H1 (cell line): ENCODE measurements at regions of chr7 and their contacts with region 1.

Region 1: DNA sequence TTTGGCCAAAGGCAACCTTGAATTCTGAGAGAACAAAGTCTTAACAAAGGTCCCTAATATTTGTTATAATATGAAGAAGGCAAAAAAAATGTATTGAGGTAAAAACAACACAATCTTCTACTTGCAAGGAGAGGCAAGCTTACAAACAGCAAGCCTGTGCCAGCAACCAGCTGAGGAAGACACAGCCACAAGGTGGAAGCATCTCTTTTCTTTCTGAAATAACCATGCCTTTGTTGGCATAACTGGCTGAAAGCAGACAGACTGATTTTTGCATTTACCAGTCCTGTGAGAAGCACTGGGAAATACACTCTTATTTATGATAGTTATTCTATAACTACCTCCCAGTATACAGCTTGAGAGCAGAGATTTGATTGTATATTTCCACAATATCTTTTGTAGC is 292.0 kb downstream of the PHTF2 start:
- DNase-seq: no peak
- H3K4me3 ChIP-seq: no peak overlapping the region
- H3K27ac ChIP-seq: no peak overlapping the region
- H3K4me1 ChIP-seq: no peaks in the 10 kb centered on the region
- H3K27me3 ChIP-seq: no peaks in the 10 kb centered on the region
- CTCF ChIP-seq: peak in 1 of 3 experiments; percentile 39; a peak in 2 of 4 replicates
- EP300 ChIP-seq: no peak
- POLR2A ChIP-seq: no peak
- RAD21 ChIP-seq: peak; percentile 47 to 58

Region 2: DNA sequence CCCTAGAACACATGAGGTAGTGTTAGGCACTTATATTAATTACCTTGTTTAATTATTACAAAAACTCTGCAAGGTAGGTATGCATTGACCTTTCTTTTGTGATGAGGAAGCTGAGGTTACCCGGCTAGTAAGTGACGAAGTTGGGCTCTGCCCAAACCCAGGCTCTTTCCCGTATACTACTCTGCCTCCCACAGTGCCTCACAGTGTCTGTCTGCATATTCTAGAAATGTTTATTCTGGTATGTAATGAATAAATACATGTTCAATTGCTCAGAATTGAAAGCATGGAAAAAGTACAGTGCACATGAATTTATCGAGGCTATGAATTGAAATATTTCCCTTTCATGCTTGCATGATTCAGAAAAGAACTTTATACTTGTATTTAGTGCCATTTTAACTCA is 12.9 kb after region 1 on chr7:
- CTCF ChIA-PET with region 1: interaction called, 10 read pairs
- POLR2A ChIA-PET with region 1: interaction called, 4 read pairs
- DNase-seq: no peak
- H3K4me3 ChIP-seq: no peak overlapping the region
- H3K27ac ChIP-seq: no peak overlapping the region
- H3K4me1 ChIP-seq: no peaks in the 10 kb centered on the region
- H3K27me3 ChIP-seq: no peaks in the 10 kb centered on the region
- CTCF ChIP-seq: no peak
- EP300 ChIP-seq: no peak
- POLR2A ChIP-seq: no peak
- RAD21 ChIP-seq: no peak

Region 3: GRCh38 chr7:78151229-78151628 is 60.6 kb after region 1 on chr7:
- CTCF ChIA-PET with region 1: no interaction called
- POLR2A ChIA-PET with region 1: no interaction called
- DNase-seq: no peak
- H3K4me3 ChIP-seq: no peak overlapping the region
- H3K27ac ChIP-seq: no peak overlapping the region
- H3K4me1 ChIP-seq: no peaks in the 10 kb centered on the region
- H3K27me3 ChIP-seq: no peaks in the 10 kb centered on the region
- CTCF ChIP-seq: no peak
- EP300 ChIP-seq: no peak
- POLR2A ChIP-seq: no peak
- RAD21 ChIP-seq: no peak